Left ventricle myocardium inferior (tissue), 1 donor: ENCODE measurements at regions of chr7 and their contacts with region 1.

Region 1: DNA sequence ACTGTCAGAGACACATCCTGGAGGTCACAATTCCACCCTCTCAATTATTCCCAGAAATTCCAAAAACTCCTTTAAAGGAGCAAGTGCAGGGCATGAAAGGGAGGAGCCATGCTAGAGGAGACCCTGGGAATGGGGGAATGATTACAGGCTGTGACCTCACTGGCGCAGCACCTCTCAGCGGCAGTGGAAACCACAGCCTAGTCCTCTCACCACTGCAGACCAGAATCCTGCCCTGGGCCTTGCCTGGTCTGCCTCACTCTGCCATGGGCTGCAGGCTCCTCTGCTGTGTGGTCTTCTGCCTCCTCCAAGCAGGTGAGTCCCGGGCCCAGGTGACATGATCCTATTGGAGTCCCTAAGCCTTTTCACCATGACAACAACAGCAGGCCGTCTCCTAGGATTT is 50.5 kb upstream of the PRSS58 start:
- DNase-seq: no peak
- H3K4me3 ChIP-seq: no peak overlapping the region
- H3K27ac ChIP-seq: no peak overlapping the region
- H3K4me1 ChIP-seq: no peaks in the 10 kb centered on the region
- H3K27me3 ChIP-seq: peaks cover 17% of the 10 kb centered on the region
- CTCF ChIP-seq: no peak

Region 2: DNA sequence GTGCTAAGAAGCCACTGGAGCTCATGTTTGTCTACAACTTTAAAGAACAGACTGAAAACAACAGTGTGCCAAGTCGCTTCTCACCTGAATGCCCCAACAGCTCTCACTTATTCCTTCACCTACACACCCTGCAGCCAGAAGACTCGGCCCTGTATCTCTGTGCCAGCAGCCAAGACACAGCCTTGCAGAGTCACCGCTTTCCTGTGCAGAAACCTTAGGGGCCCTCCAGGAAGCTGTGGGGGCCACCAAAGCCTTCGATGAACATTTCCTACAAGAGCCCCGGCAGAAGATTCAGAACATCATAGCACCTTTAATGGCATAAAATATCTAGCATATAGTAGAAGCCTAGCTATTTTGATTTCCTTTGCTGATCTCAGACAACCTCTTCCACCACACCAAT is 37.5 kb after region 1 on chr7:
- intact Hi-C with region 1: loop called (anchors 2 kb)
- DNase-seq: no peak
- H3K4me3 ChIP-seq: no peak overlapping the region
- H3K27ac ChIP-seq: no peak overlapping the region
- H3K4me1 ChIP-seq: no peaks in the 10 kb centered on the region
- H3K27me3 ChIP-seq: peaks cover 35% of the 10 kb centered on the region
- CTCF ChIP-seq: no peak

Region 3: GRCh38 chr7:142412551-142413193 is 104.3 kb after region 1 on chr7:
- intact Hi-C with region 1: no loop called
- DNase-seq: no peak
- H3K4me3 ChIP-seq: no peak overlapping the region
- H3K27ac ChIP-seq: no peak overlapping the region
- H3K4me1 ChIP-seq: no peaks in the 10 kb centered on the region
- H3K27me3 ChIP-seq: no peaks in the 10 kb centered on the region
- CTCF ChIP-seq: peak; percentile 36

Region 4: DNA sequence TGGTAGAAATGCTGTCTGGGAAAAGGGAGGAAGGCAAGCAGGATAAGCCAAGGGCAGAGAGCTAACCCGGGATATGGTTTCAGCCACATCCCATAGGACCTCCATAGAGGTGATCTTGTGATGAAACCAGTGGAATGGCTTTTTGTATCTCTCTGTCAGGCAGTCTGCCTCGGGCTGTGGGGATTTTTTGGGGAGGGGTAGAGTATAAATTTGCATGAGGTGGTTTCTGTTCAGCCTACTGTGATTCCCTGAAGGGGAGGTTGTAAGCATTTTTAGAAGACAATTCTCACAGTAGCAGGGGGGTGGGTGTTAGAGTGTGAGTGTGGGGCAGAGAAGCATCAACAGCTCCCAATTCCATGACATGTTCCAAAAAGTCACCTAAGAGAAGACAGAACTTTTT is 706.8 kb after region 1 on chr7:
- intact Hi-C with region 1: no loop called
- DNase-seq: no peak
- H3K4me3 ChIP-seq: no peak overlapping the region
- H3K27ac ChIP-seq: no peak overlapping the region
- H3K4me1 ChIP-seq: no peaks in the 10 kb centered on the region
- H3K27me3 ChIP-seq: no peaks in the 10 kb centered on the region
- CTCF ChIP-seq: no peak